WTC11 (cell line): ENCODE measurements at regions of chr1 and their contacts with region 1.

Region 1: GRCh38 chr1:151070474-151071276 is at the start of gene GABPB2:
- DNase-seq: peak; percentile 93
- ATAC-seq: peak; percentile 90
- H3K4me3 Mint-ChIP-seq: peak within 1 kb of the TSS; percentile 94
- H3K27ac Mint-ChIP-seq: peak within 1 kb of the TSS; percentile 100
- H3K4me1 Mint-ChIP-seq: peaks cover 10% of the 10 kb centered on the region
- H3K27me3 Mint-ChIP-seq: no peaks in the 10 kb centered on the region
- CTCF ChIP-seq: peak; percentile 97
- total RNA-seq, gene GABPB2: 1.4 to 3.3 TPM (median 1.7 TPM) in 3 replicates

Region 2: DNA sequence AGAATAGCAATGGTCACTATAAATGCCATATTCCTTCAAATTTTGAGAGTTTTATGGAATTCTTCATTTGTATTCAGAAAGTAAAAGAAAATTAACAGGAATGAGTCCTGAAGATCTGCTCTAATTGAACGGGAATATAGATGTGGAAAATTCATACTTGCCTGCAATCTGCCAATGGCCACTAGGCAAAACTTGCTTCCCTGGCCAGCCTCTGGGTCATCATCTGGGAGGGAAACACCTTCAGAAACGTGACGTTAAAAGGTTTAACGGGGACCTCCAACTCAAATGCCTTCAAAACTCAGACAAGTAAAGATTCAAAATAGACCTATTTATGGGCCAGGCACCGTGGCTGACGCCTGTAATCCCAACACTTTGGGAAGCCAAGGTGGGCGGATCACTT is 240.9 kb before region 1 on chr1:
- CTCF ChIA-PET with region 1: no interaction called
- POLR2A ChIA-PET with region 1: no interaction called
- DNase-seq: no peak
- ATAC-seq: peak; percentile 39; the same call in 1 of the 2 replicates
- H3K4me3 Mint-ChIP-seq: no peak overlapping the region
- H3K27ac Mint-ChIP-seq: no peak overlapping the region
- H3K4me1 Mint-ChIP-seq: no peaks in the 10 kb centered on the region
- H3K27me3 Mint-ChIP-seq: no peaks in the 10 kb centered on the region
- CTCF ChIP-seq: no peak

Region 3: GRCh38 chr1:151006327-151007052 is 64.2 kb before region 1 on chr1 and contains the start of gene MINDY1:
- CTCF ChIA-PET with region 1: interaction called, 19 read pairs
- POLR2A ChIA-PET with region 1: interaction called, 6 read pairs
- DNase-seq: peak; percentile 73
- ATAC-seq: peak; percentile 89
- H3K4me3 Mint-ChIP-seq: peak within 1 kb of the TSS; percentile 94
- H3K27ac Mint-ChIP-seq: peak within 1 kb of the TSS; percentile 99
- H3K4me1 Mint-ChIP-seq: peaks cover 38% of the 10 kb centered on the region
- H3K27me3 Mint-ChIP-seq: no peaks in the 10 kb centered on the region
- CTCF ChIP-seq: no peak
- total RNA-seq, gene MINDY1: 10.1 to 11.2 TPM (median 11.0 TPM) in 3 replicates

Region 4: GRCh38 chr1:151047925-151048645 is 22.6 kb before region 1 on chr1:
- CTCF ChIA-PET with region 1: interaction called, 21 read pairs
- POLR2A ChIA-PET with region 1: interaction called, 4 read pairs
- DNase-seq: peak; percentile 76
- ATAC-seq: peak; percentile 35
- H3K4me3 Mint-ChIP-seq: peak overlapping the region; percentile 96
- H3K27ac Mint-ChIP-seq: peak overlapping the region; percentile 97
- H3K4me1 Mint-ChIP-seq: peaks cover 17% of the 10 kb centered on the region
- H3K27me3 Mint-ChIP-seq: no peaks in the 10 kb centered on the region
- CTCF ChIP-seq: peak; percentile 30; the same call in 1 of the 2 replicates

Region 5: DNA sequence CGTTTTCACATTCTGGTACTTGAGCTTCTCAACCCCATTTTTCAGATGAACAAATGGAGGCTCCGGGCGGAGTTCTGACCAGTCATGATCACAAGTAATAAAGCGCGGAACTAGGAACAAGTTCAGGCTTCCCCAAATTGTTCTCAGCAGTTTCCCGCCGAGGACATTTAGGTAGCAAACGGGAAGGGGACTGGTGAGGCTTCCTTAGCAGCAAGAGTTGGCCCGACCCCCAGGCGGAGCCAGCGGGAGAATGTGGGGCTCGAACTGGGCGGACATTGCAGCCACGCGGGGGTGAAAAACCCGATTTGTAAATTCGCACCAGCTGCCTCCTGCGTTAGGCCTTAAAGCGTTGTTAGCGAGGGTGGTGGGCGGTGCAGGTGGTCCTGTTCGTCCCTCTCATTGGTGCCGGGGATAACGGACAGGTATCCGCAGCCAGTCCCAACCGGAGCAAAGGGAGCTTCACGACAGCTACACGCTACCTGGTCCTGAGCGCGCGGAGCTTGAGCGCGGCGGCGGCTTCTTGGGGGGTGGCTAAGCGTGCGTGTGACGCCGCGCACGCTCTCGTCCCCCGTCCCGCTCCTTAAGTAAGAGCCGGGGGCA is 60.4 kb after region 1 on chr1:
- CTCF ChIA-PET with region 1: interaction called, 12 read pairs
- POLR2A ChIA-PET with region 1: interaction called, 5 read pairs
- DNase-seq: peak; percentile 96
- ATAC-seq: peak; percentile 93
- H3K4me3 Mint-ChIP-seq: peak overlapping the region; percentile 72
- H3K27ac Mint-ChIP-seq: peak overlapping the region; percentile 83
- H3K4me1 Mint-ChIP-seq: peaks cover 15% of the 10 kb centered on the region
- H3K27me3 Mint-ChIP-seq: peaks cover 43% of the 10 kb centered on the region
- CTCF ChIP-seq: no peak

Region 6: DNA sequence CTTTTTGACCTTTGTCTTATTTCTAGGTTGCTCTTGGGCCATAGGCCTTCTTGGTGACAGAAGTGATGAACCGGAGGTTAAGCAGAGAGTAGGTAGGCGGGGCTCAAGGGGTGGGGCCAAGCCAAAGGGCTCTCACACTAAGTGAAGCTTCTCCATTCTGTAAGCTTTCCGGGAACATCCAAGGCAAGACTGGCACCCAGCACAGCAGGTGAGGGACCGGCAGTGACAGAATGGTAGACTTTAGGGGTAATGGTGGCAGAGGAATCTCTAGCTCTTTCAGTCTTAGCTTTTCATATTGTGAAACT is 85.8 kb after region 1 on chr1 and contains the start of gene TNFAIP8L2:
- CTCF ChIA-PET with region 1: interaction called, 10 read pairs
- POLR2A ChIA-PET with region 1: no interaction called
- DNase-seq: peak; percentile 43
- ATAC-seq: peak; percentile 76
- H3K4me3 Mint-ChIP-seq: no peak within 1 kb of the TSS
- H3K27ac Mint-ChIP-seq: peak within 1 kb of the TSS; percentile 11; the same call in 1 of the 2 replicates
- H3K4me1 Mint-ChIP-seq: peaks cover 8% of the 10 kb centered on the region
- H3K27me3 Mint-ChIP-seq: no peaks in the 10 kb centered on the region
- CTCF ChIP-seq: no peak
- total RNA-seq, gene TNFAIP8L2: 0.15 TPM in 1 of 3 replicates, not detected in the others